ENCODE measurements at regions of chr11 and their contacts with region 1.

Region 1: DNA sequence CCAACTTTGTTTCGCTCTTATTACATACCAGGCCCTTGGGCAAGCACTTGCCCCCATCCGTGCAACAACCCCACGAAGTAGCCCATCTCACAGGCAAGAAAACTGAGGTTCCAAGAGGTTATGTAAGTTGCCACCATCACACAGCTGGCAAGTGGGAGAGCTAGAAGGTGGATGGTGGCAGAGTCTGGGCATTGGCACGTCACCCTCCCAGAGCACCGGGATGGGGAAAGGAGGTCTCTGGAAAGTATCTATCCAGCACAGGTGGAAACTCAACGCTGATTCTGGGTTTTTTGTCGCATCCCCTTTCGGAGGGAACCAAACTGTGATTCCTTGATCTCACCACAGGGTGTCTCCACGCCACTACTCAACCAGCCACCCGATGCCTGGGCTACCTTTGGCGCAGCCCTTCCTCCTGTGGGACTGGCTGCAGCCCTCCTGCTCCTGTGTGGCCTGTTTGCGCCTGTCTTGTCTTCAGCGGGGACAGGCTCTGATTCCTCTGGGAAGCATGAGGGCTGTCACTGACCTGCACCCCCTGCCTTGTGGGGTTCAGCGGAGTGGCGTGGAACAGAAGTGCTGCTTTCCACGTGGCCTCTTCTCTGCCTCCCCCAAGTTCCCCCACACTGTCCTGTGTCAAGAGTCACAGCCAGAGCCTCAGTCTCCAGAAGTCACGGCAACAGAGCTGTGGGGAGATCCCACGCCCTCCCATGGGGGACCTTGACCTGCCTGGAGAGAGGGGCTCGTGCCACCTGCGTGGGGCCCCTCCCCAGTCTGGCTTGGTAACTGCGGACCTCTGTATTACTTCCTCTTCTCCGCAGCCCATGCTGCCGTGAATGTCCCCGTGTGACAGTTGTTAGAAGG is 34.4 kb upstream of the TRIM29 start:
- DNase-seq: peak; percentile 82
- ATAC-seq: peak; percentile 50
- H3K4me3 Mint-ChIP-seq: no peak overlapping the region
- H3K27ac Mint-ChIP-seq: no peak overlapping the region
- H3K4me1 Mint-ChIP-seq: peaks cover 9% of the 10 kb centered on the region; the same call in 1 of the 2 replicates
- H3K27me3 Mint-ChIP-seq: peaks cover 89% of the 10 kb centered on the region
- CTCF ChIP-seq: peak; percentile 27; the same call in 1 of the 2 replicates

Region 2: GRCh38 chr11:120031612-120032600 is 140.4 kb before region 1 on chr11:
- CTCF ChIA-PET with region 1: no interaction called
- POLR2A ChIA-PET with region 1: no interaction called
- DNase-seq: no peak
- ATAC-seq: no peak
- H3K4me3 Mint-ChIP-seq: no peak overlapping the region
- H3K27ac Mint-ChIP-seq: no peak overlapping the region
- H3K4me1 Mint-ChIP-seq: peaks cover 20% of the 10 kb centered on the region
- H3K27me3 Mint-ChIP-seq: peaks cover 16% of the 10 kb centered on the region
- CTCF ChIP-seq: no peak

Region 3: DNA sequence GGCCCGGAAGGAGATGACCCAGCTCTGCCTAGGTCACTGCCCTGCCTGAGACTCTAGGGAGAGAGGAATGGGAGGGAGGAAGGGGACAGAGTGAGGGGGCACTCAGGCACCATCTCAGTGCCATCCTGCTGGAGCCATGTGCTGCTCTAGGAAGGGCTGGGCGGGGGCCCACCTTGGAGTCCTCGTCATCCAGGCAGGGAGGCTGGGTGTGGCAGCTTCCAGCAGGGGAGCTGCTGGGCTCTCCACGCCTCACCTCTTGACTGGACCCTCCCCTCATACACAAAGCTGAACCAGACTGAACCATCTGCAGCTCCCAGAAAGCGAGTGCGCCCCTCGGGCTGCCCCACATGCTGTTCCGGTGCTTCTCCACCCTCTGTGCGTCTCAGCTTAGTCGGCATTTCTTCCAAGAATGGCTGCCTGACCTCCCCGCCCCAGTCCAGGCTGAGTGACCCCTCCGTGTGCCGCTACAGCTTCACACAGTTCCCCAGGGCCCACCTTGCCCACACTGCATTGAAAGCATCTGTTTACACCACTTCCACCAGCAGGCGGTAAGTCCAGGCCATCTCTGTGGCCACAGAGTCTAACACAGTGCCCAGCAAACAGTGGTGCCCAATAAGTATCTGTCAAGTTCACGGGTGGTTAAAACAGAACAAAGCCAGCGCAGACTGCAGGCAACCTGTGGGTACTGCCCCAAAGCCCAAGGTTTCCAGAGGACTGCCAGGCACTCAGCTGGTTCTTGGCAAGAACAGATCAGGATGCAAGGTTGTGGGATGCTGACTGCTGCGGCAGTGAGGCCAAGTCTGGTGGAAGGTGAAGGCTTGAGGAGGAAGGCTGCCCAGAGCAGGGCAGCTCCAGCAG is 25.0 kb before region 1 on chr11:
- CTCF ChIA-PET with region 1: interaction called, 19 read pairs
- POLR2A ChIA-PET with region 1: no interaction called
- DNase-seq: no peak
- ATAC-seq: peak; percentile 28; the same call in 1 of the 2 replicates
- H3K4me3 Mint-ChIP-seq: no peak overlapping the region
- H3K27ac Mint-ChIP-seq: no peak overlapping the region
- H3K4me1 Mint-ChIP-seq: peaks cover 16% of the 10 kb centered on the region
- H3K27me3 Mint-ChIP-seq: peaks cover 12% of the 10 kb centered on the region
- CTCF ChIP-seq: no peak

Region 4: GRCh38 chr11:120197251-120197891 is 25.1 kb after region 1 on chr11:
- CTCF ChIA-PET with region 1: interaction called, 12 read pairs
- POLR2A ChIA-PET with region 1: interaction called, 3 read pairs
- DNase-seq: no peak
- ATAC-seq: peak; percentile 70
- H3K4me3 Mint-ChIP-seq: no peak overlapping the region; the same call in 1 of the 2 replicates
- H3K27ac Mint-ChIP-seq: no peak overlapping the region
- H3K4me1 Mint-ChIP-seq: peaks cover 47% of the 10 kb centered on the region
- H3K27me3 Mint-ChIP-seq: peaks cover 79% of the 10 kb centered on the region
- CTCF ChIP-seq: no peak

Region 5: GRCh38 chr11:120229451-120230424 is 57.5 kb after region 1 on chr11:
- CTCF ChIA-PET with region 1: interaction called, 94 read pairs
- POLR2A ChIA-PET with region 1: no interaction called
- DNase-seq: peak; percentile 57
- ATAC-seq: peak; percentile 49
- H3K4me3 Mint-ChIP-seq: no peak overlapping the region
- H3K27ac Mint-ChIP-seq: no peak overlapping the region
- H3K4me1 Mint-ChIP-seq: peaks cover 14% of the 10 kb centered on the region
- H3K27me3 Mint-ChIP-seq: peaks cover 2% of the 10 kb centered on the region; the same call in 1 of the 2 replicates
- CTCF ChIP-seq: peak; percentile 41